ENCODE measurements at regions of chr10 and their contacts with region 1.

Region 1: DNA sequence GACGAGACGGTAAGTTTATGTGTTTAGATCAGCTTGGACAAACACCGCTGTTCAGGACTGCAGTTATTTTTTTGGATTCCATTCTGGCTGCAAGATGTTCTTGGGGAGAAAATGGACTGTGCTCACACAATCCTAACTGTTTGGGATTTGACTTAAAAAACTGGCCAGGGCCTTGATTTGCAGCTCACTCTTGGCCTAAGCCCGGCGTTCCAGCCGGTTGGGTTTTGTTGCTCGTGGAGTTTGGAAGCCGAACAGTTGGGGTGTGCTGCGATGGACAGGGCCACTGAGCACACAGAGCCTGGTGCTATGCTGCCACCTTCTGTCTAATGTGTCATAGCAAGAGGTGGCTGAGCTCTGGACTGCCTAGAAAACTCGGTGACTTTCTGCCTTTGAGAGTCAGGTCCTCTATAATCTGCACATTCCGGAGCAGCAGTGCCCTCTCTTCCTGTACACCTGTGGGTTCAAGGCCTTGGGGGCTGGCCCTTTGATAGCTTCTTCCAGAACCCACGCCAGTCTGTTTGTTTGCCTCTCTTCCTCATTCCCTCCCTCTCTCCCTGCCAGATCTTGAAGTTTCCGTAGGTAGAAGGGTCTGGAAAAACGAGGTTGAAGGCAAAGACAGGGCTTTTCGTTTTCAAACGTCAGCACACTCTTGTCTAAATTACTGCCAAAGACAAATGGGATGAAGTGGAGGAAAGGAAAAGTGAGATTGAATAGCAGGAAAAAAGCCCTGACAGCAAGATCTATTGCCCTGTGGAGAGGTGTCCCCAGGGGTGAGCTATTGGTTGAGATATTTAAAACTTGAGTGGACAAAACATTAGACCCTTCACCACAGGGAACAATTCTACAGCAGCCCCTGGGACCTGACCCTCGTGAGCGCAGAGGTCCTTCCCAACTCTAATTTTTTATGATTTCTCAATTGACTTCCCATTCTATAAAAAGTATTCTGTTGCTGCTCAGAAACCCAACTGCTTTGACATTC is 167.5 kb upstream of the HABP2 start:
- DNase-seq: peak; percentile 49 to 84
- ATAC-seq: peak; percentile 90 to 94 (median 92)
- H3K4me3 ChIP-seq: no peak overlapping the region
- H3K4me3 Mint-ChIP-seq: peak overlapping the region; percentile 49
- H3K27ac ChIP-seq: no peak overlapping the region
- H3K27ac Mint-ChIP-seq: peak overlapping the region in 1 of 2 donors; percentile 8
- H3K4me1 ChIP-seq: peaks cover 13% of the 10 kb centered on the region
- H3K4me1 Mint-ChIP-seq: peaks cover 20 to 31% of the 10 kb centered on the region in 2 donors
- H3K27me3 ChIP-seq: no peaks in the 10 kb centered on the region
- H3K27me3 Mint-ChIP-seq: peaks cover 0 to 4% of the 10 kb centered on the region in 2 donors
- CTCF ChIP-seq: peak; percentile 78

Region 2: GRCh38 chr10:112475575-112476218 is 909.6 kb before region 1 on chr10:
- intact Hi-C with region 1: loop called (anchors 2 kb)
- DNase-seq: peak in 1 of 2 donors; percentile 20
- ATAC-seq: no peak
- H3K4me3 ChIP-seq: no peak overlapping the region
- H3K4me3 Mint-ChIP-seq: no peak overlapping the region
- H3K27ac ChIP-seq: no peak overlapping the region
- H3K27ac Mint-ChIP-seq: no peak overlapping the region
- H3K4me1 ChIP-seq: no peaks in the 10 kb centered on the region
- H3K4me1 Mint-ChIP-seq: peaks cover 0 to 21% of the 10 kb centered on the region in 2 donors
- H3K27me3 ChIP-seq: no peaks in the 10 kb centered on the region
- H3K27me3 Mint-ChIP-seq: no peaks in the 10 kb centered on the region
- CTCF ChIP-seq: peak; percentile 12

Region 3: DNA sequence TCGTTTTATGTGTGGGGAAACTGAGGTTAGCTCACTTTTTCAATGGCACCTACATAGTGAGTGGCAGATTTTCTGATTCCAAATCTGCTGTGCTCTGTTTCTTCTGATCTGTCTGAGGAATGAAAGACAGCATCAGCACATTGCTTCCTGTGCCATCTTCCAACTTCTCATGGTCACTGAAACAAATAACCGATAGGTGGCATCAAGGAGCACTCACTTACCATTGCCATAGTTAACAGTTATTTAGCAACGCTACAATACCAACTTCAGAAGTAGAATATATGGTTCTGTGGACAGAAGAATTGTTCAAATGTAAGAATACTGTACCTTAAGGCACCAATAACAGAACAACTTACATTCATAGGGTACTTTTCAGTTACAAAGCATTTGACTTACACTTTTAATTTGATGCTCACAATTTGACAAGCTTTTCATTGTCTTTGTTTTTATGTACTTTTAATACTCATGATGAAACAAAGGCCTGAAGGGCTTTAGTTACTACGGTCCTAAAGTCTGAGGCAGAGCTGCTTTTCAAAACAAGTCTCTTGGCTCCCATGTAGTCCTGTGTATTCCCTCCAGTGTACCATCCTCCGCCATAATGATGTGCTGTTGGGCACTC is 664.1 kb before region 1 on chr10:
- intact Hi-C with region 1: loop called (anchors 1 kb)
- DNase-seq: peak in 1 of 2 donors; percentile 61
- ATAC-seq: peak in 1 of 3 donors; percentile 72
- H3K4me3 ChIP-seq: no peak overlapping the region
- H3K4me3 Mint-ChIP-seq: no peak overlapping the region
- H3K27ac ChIP-seq: no peak overlapping the region
- H3K27ac Mint-ChIP-seq: no peak overlapping the region
- H3K4me1 ChIP-seq: no peaks in the 10 kb centered on the region
- H3K4me1 Mint-ChIP-seq: peaks cover 5 to 7% of the 10 kb centered on the region in 2 donors
- H3K27me3 ChIP-seq: no peaks in the 10 kb centered on the region
- H3K27me3 Mint-ChIP-seq: no peaks in the 10 kb centered on the region
- CTCF ChIP-seq: peak; percentile 66

Region 4: DNA sequence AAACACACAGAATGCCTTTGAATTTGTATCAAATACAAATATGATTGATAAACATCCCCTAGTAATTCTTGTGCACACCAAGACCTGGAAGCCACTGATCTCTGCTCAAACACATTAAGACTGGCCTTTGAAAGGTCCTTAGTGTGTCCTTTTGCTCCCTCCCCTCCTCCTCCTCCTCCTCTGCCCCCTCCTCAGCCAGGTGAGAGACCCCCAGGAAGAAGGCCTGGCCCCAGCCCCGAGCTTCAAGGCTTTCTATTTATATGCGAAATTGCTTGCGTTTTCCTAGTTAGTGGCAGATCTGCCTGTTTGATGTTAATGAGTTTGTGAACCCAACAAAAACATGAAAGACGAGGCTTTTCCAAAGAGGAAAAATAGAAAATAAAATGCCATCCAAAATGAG is 498.8 kb before region 1 on chr10:
- intact Hi-C with region 1: no loop called
- DNase-seq: no peak
- ATAC-seq: no peak
- H3K4me3 ChIP-seq: no peak overlapping the region
- H3K4me3 Mint-ChIP-seq: no peak overlapping the region
- H3K27ac ChIP-seq: no peak overlapping the region
- H3K27ac Mint-ChIP-seq: no peak overlapping the region
- H3K4me1 ChIP-seq: no peaks in the 10 kb centered on the region
- H3K4me1 Mint-ChIP-seq: no peaks in the 10 kb centered on the region
- H3K27me3 ChIP-seq: no peaks in the 10 kb centered on the region
- H3K27me3 Mint-ChIP-seq: peaks cover 0 to 7% of the 10 kb centered on the region in 2 donors
- CTCF ChIP-seq: no peak

Region 5: DNA sequence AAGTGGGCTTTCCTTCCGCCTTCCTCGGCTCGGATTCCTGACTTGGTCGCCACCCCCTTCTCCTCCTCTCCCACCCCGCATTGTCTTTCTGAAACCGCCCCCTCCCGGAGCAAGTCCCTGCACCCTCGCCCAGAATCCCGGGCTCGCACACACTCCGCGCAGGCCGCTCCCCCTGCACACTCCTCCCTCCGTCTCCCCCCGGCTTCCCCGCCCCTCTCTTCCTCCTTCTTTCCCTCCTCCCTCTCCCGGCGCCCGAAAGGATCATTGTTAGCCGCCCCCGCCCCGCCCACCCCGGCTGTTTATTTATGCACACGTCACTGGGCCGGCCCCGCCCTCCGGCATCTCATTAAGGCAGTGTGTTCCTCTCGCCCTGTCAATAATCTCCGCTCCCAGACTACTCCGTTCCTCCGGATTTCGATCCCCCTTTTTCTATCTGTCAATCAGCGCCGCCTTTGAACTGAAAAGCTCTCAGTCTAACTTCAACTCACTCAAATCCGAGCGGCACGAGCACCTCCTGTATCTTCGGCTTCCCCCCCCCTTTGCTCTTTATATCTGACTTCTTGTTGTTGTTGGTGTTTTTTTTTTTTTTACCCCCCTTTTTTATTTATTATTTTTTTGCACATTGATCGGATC is 435.3 kb before region 1 on chr10 and contains the start of gene TCF7L2:
- intact Hi-C with region 1: loop called (anchors 5 kb)
- DNase-seq: peak; percentile 61 to 85
- ATAC-seq: peak; percentile 65 to 74 (median 74)
- H3K4me3 ChIP-seq: peak within 1 kb of the TSS; percentile 53
- H3K4me3 Mint-ChIP-seq: peak within 1 kb of the TSS; percentile 99
- H3K27ac ChIP-seq: peak within 1 kb of the TSS; percentile 54
- H3K27ac Mint-ChIP-seq: peak within 1 kb of the TSS; percentile 75 to 76
- H3K4me1 ChIP-seq: peaks cover 22% of the 10 kb centered on the region
- H3K4me1 Mint-ChIP-seq: peaks cover 30 to 37% of the 10 kb centered on the region in 2 donors
- H3K27me3 ChIP-seq: peaks cover 8% of the 10 kb centered on the region
- H3K27me3 Mint-ChIP-seq: peaks cover 4 to 25% of the 10 kb centered on the region in 2 donors
- CTCF ChIP-seq: no peak
- total RNA-seq, gene TCF7L2: 10.4 to 32.7 (median 15.3) TPM

Region 6: GRCh38 chr10:113347508-113347907 is 37.8 kb before region 1 on chr10:
- intact Hi-C with region 1: no loop called
- DNase-seq: no peak
- ATAC-seq: no peak
- H3K4me3 ChIP-seq: no peak overlapping the region
- H3K4me3 Mint-ChIP-seq: no peak overlapping the region
- H3K27ac ChIP-seq: no peak overlapping the region
- H3K27ac Mint-ChIP-seq: no peak overlapping the region
- H3K4me1 ChIP-seq: no peaks in the 10 kb centered on the region
- H3K4me1 Mint-ChIP-seq: no peaks in the 10 kb centered on the region
- H3K27me3 ChIP-seq: no peaks in the 10 kb centered on the region
- H3K27me3 Mint-ChIP-seq: peaks cover 9 to 12% of the 10 kb centered on the region in 2 donors
- CTCF ChIP-seq: no peak

Region 7: GRCh38 chr10:113534423-113534822 is 149.1 kb after region 1 on chr10:
- intact Hi-C with region 1: no loop called
- DNase-seq: no peak
- ATAC-seq: no peak
- H3K4me3 ChIP-seq: no peak overlapping the region
- H3K4me3 Mint-ChIP-seq: no peak overlapping the region
- H3K27ac ChIP-seq: no peak overlapping the region
- H3K27ac Mint-ChIP-seq: no peak overlapping the region
- H3K4me1 ChIP-seq: no peaks in the 10 kb centered on the region
- H3K4me1 Mint-ChIP-seq: no peaks in the 10 kb centered on the region
- H3K27me3 ChIP-seq: no peaks in the 10 kb centered on the region
- H3K27me3 Mint-ChIP-seq: no peaks in the 10 kb centered on the region
- CTCF ChIP-seq: no peak